Stomach (tissue), 19 donors: ENCODE measurements at regions of chr1 and their contacts with region 1.

Region 1: GRCh38 chr1:40849801-40850592 is 12.2 kb downstream of the CITED4 start:
- DNase-seq: peak; percentile 79 to 89
- H3K4me3 ChIP-seq: no peak overlapping the region
- H3K27ac ChIP-seq: no peak overlapping the region
- H3K4me1 ChIP-seq: peaks cover 0 to 17% (median 8%) of the 10 kb centered on the region in 4 donors
- H3K27me3 ChIP-seq: no peaks in the 10 kb centered on the region
- CTCF ChIP-seq: peak in 5 of 7 experiments; percentile 73 to 96 (median 85)
- EP300 ChIP-seq: no peak
- POLR2A ChIP-seq: no peak

Region 2: DNA sequence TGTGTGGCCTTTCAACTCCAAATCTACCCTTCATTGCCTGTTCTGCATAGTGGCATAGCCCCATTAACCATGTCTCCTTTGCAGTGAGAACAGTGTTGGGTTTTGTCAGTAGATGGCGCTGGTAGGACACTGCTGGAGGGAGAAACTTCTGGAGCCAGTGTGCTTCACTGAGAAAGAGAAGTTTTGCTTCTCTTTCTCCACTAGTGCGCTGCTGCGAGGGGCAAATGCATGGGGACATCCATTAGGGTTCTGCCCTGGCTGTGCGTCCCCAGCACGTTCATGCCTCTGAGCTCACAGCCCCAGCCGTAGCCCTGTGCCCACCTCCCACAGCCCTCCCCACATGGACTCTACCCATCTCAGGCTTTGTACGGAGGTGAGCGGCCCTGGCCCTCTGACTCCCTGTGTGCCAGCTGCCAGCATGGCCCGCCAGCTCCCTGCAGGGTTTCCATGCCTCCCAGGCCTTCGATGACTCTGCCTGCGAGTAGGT is 237.6 kb before region 1 on chr1:
- intact Hi-C with region 1: loop called (anchors 10 kb)
- DNase-seq: peak; percentile 73 to 87
- H3K4me3 ChIP-seq: no peak overlapping the region
- H3K27ac ChIP-seq: no peak overlapping the region
- H3K4me1 ChIP-seq: peaks cover 0 to 8% (median 0%) of the 10 kb centered on the region in 4 donors
- H3K27me3 ChIP-seq: no peaks in the 10 kb centered on the region
- CTCF ChIP-seq: peak in 5 of 7 experiments; percentile 61 to 84 (median 69)
- EP300 ChIP-seq: no peak
- POLR2A ChIP-seq: no peak

Region 3: GRCh38 chr1:40774266-40774998 is 75.6 kb before region 1 on chr1:
- intact Hi-C with region 1: loop called (anchors 10 kb)
- DNase-seq: peak; percentile 66 to 76
- H3K4me3 ChIP-seq: no peak overlapping the region
- H3K27ac ChIP-seq: no peak overlapping the region
- H3K4me1 ChIP-seq: peaks cover 0 to 15% (median 12%) of the 10 kb centered on the region in 4 donors
- H3K27me3 ChIP-seq: no peaks in the 10 kb centered on the region
- CTCF ChIP-seq: peak in 4 of 7 experiments; percentile 63 to 77 (median 72)
- EP300 ChIP-seq: no peak
- POLR2A ChIP-seq: no peak

Region 4: DNA sequence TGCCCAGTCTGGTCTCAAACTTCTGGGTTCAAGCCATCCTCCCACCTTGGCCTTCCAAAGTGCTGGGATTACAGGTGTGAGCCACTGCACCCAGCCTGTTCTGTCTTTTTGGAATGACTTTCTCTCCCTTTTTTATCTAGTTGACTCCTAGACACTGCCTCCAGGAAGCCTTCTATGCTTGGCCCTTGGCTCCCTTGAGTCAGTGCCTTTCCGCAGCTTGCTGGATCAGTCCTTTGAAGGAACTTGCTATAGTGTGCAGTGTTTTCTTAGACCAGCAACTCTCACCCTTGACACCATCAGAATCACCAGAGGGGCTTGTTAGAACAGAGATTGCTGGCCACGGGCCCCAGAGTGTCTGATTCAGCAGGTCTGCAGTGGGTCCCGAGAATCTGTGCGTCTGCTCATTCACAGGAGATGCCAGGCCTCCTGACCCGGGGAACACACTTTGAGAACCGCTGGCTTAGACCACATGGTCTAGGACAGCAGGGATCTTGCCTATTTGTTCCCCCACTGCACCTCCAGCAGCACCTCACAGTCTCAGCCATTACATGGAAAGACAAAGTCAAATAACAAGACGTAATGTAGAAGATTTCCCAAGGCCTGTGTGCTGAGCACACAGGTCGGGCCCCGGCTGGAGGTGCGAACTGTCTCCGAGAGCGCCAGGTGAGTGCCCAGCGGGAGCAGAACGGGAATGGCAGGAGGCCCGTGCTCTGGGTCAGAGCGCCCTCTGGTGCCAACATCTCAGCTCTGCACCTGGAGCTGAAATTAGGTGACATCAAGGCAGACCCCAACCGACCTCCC is 102.1 kb after region 1 on chr1:
- intact Hi-C with region 1: loop called (anchors 5 kb)
- DNase-seq: peak; percentile 83 to 86
- H3K4me3 ChIP-seq: peak overlapping the region in 1 of 4 donors; percentile 0
- H3K27ac ChIP-seq: no peak overlapping the region
- H3K4me1 ChIP-seq: peaks cover 0 to 32% (median 14%) of the 10 kb centered on the region in 4 donors
- H3K27me3 ChIP-seq: peaks cover 0 to 18% (median 0%) of the 10 kb centered on the region in 3 donors
- CTCF ChIP-seq: peak in 5 of 7 experiments; percentile 83 to 95 (median 88)
- EP300 ChIP-seq: no peak
- POLR2A ChIP-seq: no peak